Heart left ventricle (tissue), 16 donors: ENCODE measurements at regions of chr9 and their contacts with region 1.

Region 1: DNA sequence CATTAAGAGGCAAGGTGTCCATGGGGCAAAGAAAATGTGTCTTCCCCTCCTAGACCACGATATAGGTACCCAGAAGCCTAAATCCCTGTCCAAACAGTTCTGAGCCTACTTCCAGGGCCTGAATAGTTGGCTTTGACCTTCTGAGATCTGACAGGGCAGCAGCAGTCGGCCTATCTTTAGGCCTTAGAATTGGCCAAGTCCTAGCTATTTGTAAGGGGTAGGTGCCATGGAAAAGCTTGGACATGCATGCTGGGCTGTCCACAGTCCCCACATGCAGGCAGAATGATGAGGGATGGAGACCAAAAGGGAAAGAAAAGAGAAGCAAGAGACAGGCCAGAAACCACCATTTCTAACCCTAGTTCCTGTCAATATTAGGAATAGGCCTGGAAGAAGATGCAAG is 346.1 kb downstream of the ANXA1 start:
- DNase-seq: peak in 2 of 5 donors; percentile 6 to 26
- ATAC-seq: peak; percentile 56 to 94 (median 74)
- H3K4me3 ChIP-seq: no peak overlapping the region
- H3K27ac ChIP-seq: peak overlapping the region in 7 of 12 donors; percentile 3 to 57 (median 31)
- H3K4me1 ChIP-seq: peaks cover 0 to 22% (median 2%) of the 10 kb centered on the region in 12 donors
- H3K27me3 ChIP-seq: no peaks in the 10 kb centered on the region
- CTCF ChIP-seq: no peak
- POLR2A ChIP-seq: no peak

Region 2: GRCh38 chr9:73451003-73451402 is 46.8 kb before region 1 on chr9:
- intact Hi-C with region 1: loop called in 2 of 10 experiments (anchors 5 kb)
- DNase-seq: no peak
- ATAC-seq: no peak
- H3K4me3 ChIP-seq: no peak overlapping the region
- H3K27ac ChIP-seq: peak overlapping the region in 2 of 12 donors; percentile 71 to 73
- H3K4me1 ChIP-seq: no peaks in the 10 kb centered on the region
- H3K27me3 ChIP-seq: no peaks in the 10 kb centered on the region
- CTCF ChIP-seq: no peak
- POLR2A ChIP-seq: no peak